Naive thymus-derived CD4-positive, alpha-beta T cell (primary cell): ENCODE measurements at regions of chr9 and their contacts with region 1.

Region 1: GRCh38 chr9:99906403-99907207 is at the start of gene STX17:
- DNase-seq: peak; percentile 78 to 94 (median 88)
- ATAC-seq: peak; percentile 90
- H3K4me3 ChIP-seq: peak within 1 kb of the TSS; percentile 96
- H3K4me3 Mint-ChIP-seq: peak within 1 kb of the TSS; percentile 92 to 99 (median 97)
- H3K27ac ChIP-seq: peak within 1 kb of the TSS; percentile 99
- H3K27ac Mint-ChIP-seq: peak within 1 kb of the TSS; percentile 96 to 100 (median 99)
- H3K4me1 ChIP-seq: peaks cover 14 to 17% of the 10 kb centered on the region in 2 donors
- H3K4me1 Mint-ChIP-seq: peaks cover 29 to 46% (median 40%) of the 10 kb centered on the region in 7 donors
- H3K27me3 ChIP-seq: no peaks in the 10 kb centered on the region
- H3K27me3 Mint-ChIP-seq: peaks cover 0 to 14% (median 7%) of the 10 kb centered on the region in 5 donors
- total RNA-seq, gene STX17: 34.2 to 63.2 (median 51.2) TPM

Region 2: GRCh38 chr9:97982683-97983588 is 1923.7 kb before region 1 on chr9 and contains the start of gene ANP32B:
- CTCF ChIA-PET with region 1: no interaction called
- POLR2A ChIA-PET with region 1: no interaction called
- intact Hi-C with region 1: no loop called
- DNase-seq: peak; percentile 94 to 97 (median 96)
- ATAC-seq: peak; percentile 90
- H3K4me3 ChIP-seq: peak within 1 kb of the TSS; percentile 85
- H3K4me3 Mint-ChIP-seq: peak within 1 kb of the TSS; percentile 79 to 92 (median 86)
- H3K27ac ChIP-seq: peak within 1 kb of the TSS; percentile 98
- H3K27ac Mint-ChIP-seq: peak within 1 kb of the TSS; percentile 25 to 94 (median 85)
- H3K4me1 ChIP-seq: peaks cover 30 to 51% of the 10 kb centered on the region in 2 donors
- H3K4me1 Mint-ChIP-seq: peaks cover 48 to 70% (median 63%) of the 10 kb centered on the region in 7 donors
- H3K27me3 ChIP-seq: no peaks in the 10 kb centered on the region
- H3K27me3 Mint-ChIP-seq: no peaks in the 10 kb centered on the region
- total RNA-seq, gene ANP32B: 143 to 267 (median 186) TPM

Region 3: DNA sequence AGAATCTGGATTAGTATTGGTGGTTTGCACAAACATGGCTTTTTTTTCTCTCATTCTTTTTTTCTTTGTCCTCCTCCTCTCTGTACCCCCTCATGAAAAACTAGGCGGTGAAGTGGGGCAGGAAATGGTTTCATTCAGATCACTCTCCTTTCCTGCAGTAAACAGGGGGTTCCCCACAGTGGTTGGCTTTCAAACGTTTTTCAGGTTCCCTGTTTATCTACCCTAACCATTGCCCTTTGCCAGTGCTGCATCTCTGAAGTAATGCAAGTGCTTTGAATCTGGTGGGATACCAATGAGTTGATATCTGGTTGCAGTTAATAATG is 55.1 kb before region 1 on chr9:
- CTCF ChIA-PET with region 1: no interaction called
- POLR2A ChIA-PET with region 1: no interaction called
- intact Hi-C with region 1: loop called in 1 of 2 experiments (anchors 2 kb)
- DNase-seq: peak in 4 of 9 donors; percentile 15 to 42 (median 22)
- ATAC-seq: peak; percentile 86
- H3K4me3 ChIP-seq: no peak overlapping the region
- H3K4me3 Mint-ChIP-seq: peak overlapping the region in 7 of 10 donors; percentile 14 to 71 (median 32)
- H3K27ac ChIP-seq: no peak overlapping the region
- H3K27ac Mint-ChIP-seq: peak overlapping the region in 4 of 9 donors; percentile 49 to 81 (median 72)
- H3K4me1 ChIP-seq: peaks cover 10 to 26% of the 10 kb centered on the region in 2 donors
- H3K4me1 Mint-ChIP-seq: peaks cover 16 to 53% (median 25%) of the 10 kb centered on the region in 7 donors
- H3K27me3 ChIP-seq: no peaks in the 10 kb centered on the region
- H3K27me3 Mint-ChIP-seq: no peaks in the 10 kb centered on the region

Region 4: DNA sequence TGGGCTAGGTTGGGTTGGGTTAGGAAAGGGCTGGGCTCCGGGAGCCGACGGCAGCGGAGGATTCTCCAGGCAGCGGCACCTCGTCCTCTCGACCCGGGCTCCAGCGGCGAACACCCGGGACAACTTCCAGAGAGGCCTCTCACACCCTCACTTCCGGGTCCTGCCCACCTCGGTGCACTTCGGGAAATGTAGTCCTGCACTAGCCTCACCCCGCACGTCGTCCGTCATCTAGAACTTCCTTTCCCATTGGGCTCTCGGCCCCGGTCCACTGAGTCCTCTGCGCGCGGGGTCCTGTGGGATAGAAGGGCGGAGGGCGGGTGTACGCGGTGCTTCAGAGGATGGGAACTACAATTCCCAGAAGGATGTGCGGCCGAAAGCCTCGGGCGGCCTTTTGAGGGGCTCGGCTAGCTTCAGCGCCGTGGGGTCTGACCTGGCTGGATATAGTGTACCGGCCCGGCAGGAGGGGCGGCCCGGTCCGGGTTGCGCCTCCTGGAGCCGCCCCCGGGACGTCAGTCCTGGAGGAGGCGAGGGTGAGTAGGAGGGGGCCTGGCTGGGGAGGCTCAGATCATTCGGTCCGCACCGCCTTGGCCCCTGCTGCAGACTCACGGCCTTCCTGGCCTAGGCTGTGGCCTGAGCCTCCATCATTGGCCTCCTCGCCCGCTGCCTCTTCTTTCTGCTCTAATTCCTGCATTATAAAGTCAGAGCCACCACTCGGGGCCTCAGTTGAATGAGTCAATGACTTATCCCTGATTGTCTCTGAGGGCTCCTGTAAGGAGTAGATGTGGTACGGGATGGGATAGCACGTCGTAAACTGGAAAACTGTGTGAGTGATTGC is 192.5 kb after region 1 on chr9 and contains the starts of genes ERP44 and INVS:
- CTCF ChIA-PET with region 1: no interaction called
- POLR2A ChIA-PET with region 1: no interaction called
- intact Hi-C with region 1: loop called in 1 of 2 experiments (anchors 2 kb)
- DNase-seq: peak; percentile 82 to 98 (median 94)
- ATAC-seq: peak; percentile 99
- H3K4me3 ChIP-seq: peak within 1 kb of the TSS; percentile 93
- H3K4me3 Mint-ChIP-seq: peak within 1 kb of the TSS; percentile 94 to 100 (median 98)
- H3K27ac ChIP-seq: peak within 1 kb of the TSS; percentile 89
- H3K27ac Mint-ChIP-seq: peak within 1 kb of the TSS; percentile 84 to 99 (median 97)
- H3K4me1 ChIP-seq: peaks cover 18 to 25% of the 10 kb centered on the region in 2 donors
- H3K4me1 Mint-ChIP-seq: peaks cover 26 to 53% (median 43%) of the 10 kb centered on the region in 7 donors
- H3K27me3 ChIP-seq: no peaks in the 10 kb centered on the region
- H3K27me3 Mint-ChIP-seq: no peaks in the 10 kb centered on the region
- total RNA-seq, gene ERP44: 9.8 to 19.5 (median 15.2) TPM
- total RNA-seq, gene INVS: 15.0 to 20.8 (median 20.6) TPM

Region 5: GRCh38 chr9:100111235-100111634 is 204.6 kb after region 1 on chr9:
- CTCF ChIA-PET with region 1: no interaction called
- POLR2A ChIA-PET with region 1: no interaction called
- intact Hi-C with region 1: no loop called
- DNase-seq: no peak
- ATAC-seq: peak; percentile 26
- H3K4me3 ChIP-seq: no peak overlapping the region
- H3K4me3 Mint-ChIP-seq: no peak overlapping the region
- H3K27ac ChIP-seq: no peak overlapping the region
- H3K27ac Mint-ChIP-seq: no peak overlapping the region
- H3K4me1 ChIP-seq: no peaks in the 10 kb centered on the region
- H3K4me1 Mint-ChIP-seq: peaks cover 0 to 17% (median 8%) of the 10 kb centered on the region in 7 donors
- H3K27me3 ChIP-seq: no peaks in the 10 kb centered on the region
- H3K27me3 Mint-ChIP-seq: no peaks in the 10 kb centered on the region

Region 6: DNA sequence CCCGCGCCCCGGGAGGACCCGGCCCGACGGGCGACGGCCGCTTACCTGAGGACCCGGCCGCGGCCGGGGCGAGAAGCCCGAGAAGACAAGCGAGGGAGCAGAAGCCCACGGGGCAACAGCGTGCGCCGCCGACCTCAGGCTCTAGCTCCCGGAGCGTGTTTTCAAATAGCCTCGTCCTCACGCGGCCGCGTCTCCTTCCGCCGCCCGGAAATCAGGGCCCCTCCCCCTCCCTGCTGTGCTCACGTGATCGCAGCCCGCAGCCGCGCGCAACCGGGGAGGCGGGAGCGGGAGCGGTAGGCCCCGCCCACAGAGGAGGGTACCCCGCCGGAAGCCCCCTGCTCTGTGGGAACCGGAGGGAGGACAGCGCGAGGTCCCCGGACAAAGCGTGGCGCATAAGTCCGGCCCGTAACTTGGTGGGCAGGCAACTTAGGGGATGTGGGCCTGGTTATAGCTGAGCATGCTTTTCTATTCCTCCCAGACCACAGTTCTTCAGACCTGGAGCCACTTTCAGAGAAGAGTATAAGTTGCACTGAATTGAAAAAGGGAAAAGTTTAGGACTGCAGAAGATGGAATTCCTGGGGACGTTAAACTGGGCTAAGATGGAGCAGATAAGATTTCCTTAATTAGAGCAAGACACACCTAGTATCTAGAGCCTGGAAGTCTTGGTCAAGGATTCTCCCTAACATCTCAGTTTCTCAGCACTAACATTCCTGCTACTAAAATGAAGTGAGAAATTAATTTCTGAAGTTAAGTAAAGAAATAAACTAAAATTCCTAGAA is 446.3 kb after region 1 on chr9 and contains the start of gene TEX10:
- CTCF ChIA-PET with region 1: no interaction called
- POLR2A ChIA-PET with region 1: no interaction called
- intact Hi-C with region 1: loop called in 1 of 2 experiments (anchors 1 kb)
- DNase-seq: peak; percentile 80 to 94 (median 87)
- ATAC-seq: peak; percentile 96
- H3K4me3 ChIP-seq: peak within 1 kb of the TSS; percentile 79
- H3K4me3 Mint-ChIP-seq: peak within 1 kb of the TSS; percentile 87 to 99 (median 94)
- H3K27ac ChIP-seq: peak within 1 kb of the TSS; percentile 82
- H3K27ac Mint-ChIP-seq: peak within 1 kb of the TSS; percentile 77 to 94 (median 86)
- H3K4me1 ChIP-seq: peaks cover 8 to 22% of the 10 kb centered on the region in 2 donors
- H3K4me1 Mint-ChIP-seq: peaks cover 32 to 62% (median 53%) of the 10 kb centered on the region in 7 donors
- H3K27me3 ChIP-seq: no peaks in the 10 kb centered on the region
- H3K27me3 Mint-ChIP-seq: no peaks in the 10 kb centered on the region
- total RNA-seq, gene TEX10: 11.0 to 24.6 (median 18.2) TPM

Region 7: DNA sequence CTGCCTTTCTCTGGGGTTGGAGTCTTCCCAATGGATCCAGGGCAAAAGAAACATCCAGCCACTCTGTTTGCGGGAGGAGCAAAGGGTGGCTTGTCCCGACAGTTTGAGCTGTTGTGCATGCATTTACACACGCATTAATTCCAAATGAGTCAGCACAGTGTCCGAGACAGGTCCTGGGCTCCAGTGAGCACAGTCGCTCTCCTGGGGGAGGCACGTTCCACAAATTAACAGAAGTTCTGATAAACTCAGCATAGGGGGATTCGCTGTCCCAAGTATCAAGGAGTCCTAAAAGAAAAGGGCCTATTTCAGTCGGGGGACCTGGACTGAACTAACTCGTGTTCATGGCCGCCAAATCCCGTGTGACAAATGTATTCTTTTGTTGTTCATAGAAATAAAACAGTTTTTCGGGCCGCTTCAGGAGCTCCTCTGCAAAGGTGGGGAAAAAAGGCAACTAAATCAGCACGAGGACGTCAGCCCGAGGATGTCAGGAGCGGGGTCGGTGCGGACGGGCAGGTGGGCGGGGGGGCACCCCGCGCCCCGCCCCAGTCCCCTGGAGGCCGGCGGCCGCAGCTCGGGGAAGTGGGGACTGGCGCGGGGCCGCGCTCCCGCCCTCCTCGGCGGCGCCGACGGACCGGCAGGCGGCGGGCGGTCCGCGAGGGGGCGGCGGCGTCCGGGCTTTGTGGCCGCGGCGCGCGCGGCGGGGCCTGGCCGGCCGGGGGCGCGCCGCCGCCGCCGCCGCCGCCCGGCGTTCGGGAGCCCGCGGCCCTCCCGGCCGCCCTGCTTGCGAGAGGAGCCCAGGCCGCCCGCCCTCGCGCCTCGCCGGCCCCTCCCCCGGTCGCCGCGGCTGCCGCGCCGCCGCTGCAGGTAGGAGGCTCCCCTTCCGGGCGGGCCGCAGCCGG is 520.2 kb after region 1 on chr9 and contains the start of gene MSANTD3:
- CTCF ChIA-PET with region 1: no interaction called
- POLR2A ChIA-PET with region 1: interaction called, 4 read pairs
- intact Hi-C with region 1: loop called in 1 of 2 experiments (anchors 5 kb)
- DNase-seq: peak; percentile 22 to 67 (median 44)
- ATAC-seq: peak; percentile 87
- H3K4me3 ChIP-seq: peak within 1 kb of the TSS; percentile 73
- H3K4me3 Mint-ChIP-seq: peak within 1 kb of the TSS; percentile 90 to 99 (median 96)
- H3K27ac ChIP-seq: peak within 1 kb of the TSS; percentile 68
- H3K27ac Mint-ChIP-seq: peak within 1 kb of the TSS; percentile 84 to 98 (median 93)
- H3K4me1 ChIP-seq: peaks cover 7 to 8% of the 10 kb centered on the region in 2 donors
- H3K4me1 Mint-ChIP-seq: peaks cover 22 to 48% (median 42%) of the 10 kb centered on the region in 7 donors
- H3K27me3 ChIP-seq: no peaks in the 10 kb centered on the region
- H3K27me3 Mint-ChIP-seq: peaks cover 0 to 18% (median 2%) of the 10 kb centered on the region in 5 donors
- total RNA-seq, gene MSANTD3: 6.8 to 13.4 (median 12.0) TPM